PC-9 (cell line): ENCODE measurements at regions of chr12 and their contacts with region 1.

Region 1: DNA sequence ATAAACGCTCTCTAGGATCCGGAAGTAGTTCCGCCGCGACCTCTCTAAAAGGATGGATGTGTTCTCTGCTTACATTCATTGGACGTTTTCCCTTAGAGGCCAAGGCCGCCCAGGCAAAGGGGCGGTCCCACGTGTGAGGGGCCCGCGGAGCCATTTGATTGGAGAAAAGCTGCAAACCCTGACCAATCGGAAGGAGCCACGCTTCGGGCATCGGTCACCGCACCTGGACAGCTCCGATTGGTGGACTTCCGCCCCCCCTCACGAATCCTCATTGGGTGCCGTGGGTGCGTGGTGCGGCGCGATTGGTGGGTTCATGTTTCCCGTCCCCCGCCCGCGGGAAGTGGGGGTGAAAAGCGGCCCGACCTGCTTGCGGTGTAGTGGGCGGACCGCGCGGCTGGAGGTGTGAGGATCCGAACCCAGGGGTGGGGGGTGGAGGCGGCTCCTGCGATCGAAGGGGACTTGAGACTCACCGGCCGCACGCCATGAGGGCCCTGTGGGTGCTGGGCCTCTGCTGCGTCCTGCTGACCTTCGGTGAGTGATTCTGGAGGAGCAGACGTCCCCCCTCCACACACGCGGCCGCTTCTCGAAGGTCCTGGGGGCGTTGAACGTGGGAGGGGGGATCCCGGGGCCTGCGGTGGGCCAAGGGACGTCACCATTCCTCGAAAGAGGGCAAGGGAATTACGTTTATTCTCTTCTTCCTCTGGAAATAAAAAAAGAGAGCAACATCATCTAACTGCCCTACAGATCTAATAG is at the start of gene HSP90B1:
- DNase-seq: peak; percentile 99
- H3K4me3 ChIP-seq: peak within 1 kb of the TSS; percentile 98
- H3K27ac ChIP-seq: peak within 1 kb of the TSS; percentile 88
- H3K4me1 ChIP-seq: peaks cover 30% of the 10 kb centered on the region
- H3K27me3 ChIP-seq: no peaks in the 10 kb centered on the region
- CTCF ChIP-seq: no peak
- total RNA-seq, gene HSP90B1: 398 and 534 TPM in 2 replicates

Region 2: DNA sequence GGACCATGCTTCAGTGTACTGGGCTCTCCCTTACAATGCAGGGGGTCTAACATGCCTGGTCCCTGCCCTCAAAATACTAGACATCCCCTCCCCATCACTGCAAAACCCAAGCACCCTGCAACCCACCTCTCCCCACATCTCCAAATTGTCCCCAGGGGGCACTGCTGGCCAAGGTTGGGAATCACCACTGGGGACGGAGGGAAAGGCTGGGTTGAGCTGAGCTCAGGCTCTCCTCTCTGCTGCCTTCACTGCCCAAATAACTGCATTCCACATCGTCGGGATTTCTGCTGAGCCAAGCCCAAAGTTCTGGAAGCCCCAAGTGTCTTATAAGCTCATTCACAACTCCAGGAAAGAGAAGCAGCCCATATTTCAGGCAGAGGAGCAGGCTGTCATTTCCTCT is 158.7 kb before region 1 on chr12:
- CTCF ChIA-PET with region 1: no interaction called
- POLR2A ChIA-PET with region 1: interaction called, 3 read pairs
- intact Hi-C with region 1: loop called (anchors 5 kb)
- DNase-seq: peak in 1 of 2 experiments; percentile 49
- H3K4me3 ChIP-seq: no peak overlapping the region
- H3K27ac ChIP-seq: no peak overlapping the region
- H3K4me1 ChIP-seq: no peaks in the 10 kb centered on the region
- H3K27me3 ChIP-seq: no peaks in the 10 kb centered on the region
- CTCF ChIP-seq: peak; percentile 73

Region 3: DNA sequence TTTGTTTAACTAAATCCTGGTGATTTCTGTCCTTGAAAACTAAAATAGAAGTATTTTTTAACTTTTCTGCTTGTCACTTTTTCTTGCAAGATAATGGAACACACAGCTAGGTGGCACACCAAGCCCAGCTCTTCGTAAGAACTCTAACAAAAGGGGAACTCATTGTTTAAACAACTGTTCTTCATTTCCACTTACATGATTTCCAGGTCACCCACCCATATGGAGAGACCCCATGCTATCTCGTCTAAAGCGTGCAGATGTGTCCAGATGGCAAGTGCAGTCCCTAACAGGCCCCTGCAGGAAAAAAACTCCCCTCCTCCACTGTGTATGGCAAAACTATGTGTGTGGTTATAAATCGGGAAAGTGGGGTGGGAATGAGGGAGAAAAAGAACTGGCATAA is 45.9 kb before region 1 on chr12:
- CTCF ChIA-PET with region 1: no interaction called
- POLR2A ChIA-PET with region 1: interaction called, 8 read pairs
- intact Hi-C with region 1: loop called (anchors 5 kb)
- DNase-seq: no peak
- H3K4me3 ChIP-seq: no peak overlapping the region
- H3K27ac ChIP-seq: no peak overlapping the region
- H3K4me1 ChIP-seq: peaks cover 7% of the 10 kb centered on the region; the same call in 1 of the 2 replicates
- H3K27me3 ChIP-seq: no peaks in the 10 kb centered on the region
- CTCF ChIP-seq: peak; percentile 62

Region 4: DNA sequence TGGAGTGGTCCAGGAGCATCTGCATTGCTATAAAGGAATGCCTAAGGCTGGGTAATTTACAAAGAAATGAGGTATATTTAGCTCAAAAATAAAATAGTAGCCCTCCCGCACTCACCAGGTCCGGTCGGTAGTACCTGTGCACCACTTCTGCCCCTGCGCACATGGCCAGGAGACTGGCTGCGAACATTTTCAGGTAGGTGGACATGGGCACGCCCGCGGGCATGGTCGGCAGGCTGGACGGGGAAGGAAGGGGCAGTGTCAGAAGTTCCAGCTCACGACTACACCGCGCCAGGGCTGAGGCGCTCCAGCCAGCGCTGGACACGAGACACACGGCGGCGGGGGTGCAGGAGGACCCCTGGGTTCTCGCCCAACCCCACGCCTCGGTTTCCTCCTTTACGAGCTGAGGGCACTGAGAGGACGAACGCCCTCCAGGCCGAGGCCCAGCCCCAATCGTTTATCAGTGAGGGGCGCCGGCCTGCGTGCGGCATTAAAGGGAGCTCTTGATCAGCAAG is 26.4 kb after region 1 on chr12:
- CTCF ChIA-PET with region 1: no interaction called
- POLR2A ChIA-PET with region 1: no interaction called
- intact Hi-C with region 1: loop called (anchors 1 kb)
- DNase-seq: peak; percentile 34 to 41
- H3K4me3 ChIP-seq: peak overlapping the region; percentile 97
- H3K27ac ChIP-seq: peak overlapping the region; percentile 75
- H3K4me1 ChIP-seq: peaks cover 22% of the 10 kb centered on the region
- H3K27me3 ChIP-seq: no peaks in the 10 kb centered on the region
- CTCF ChIP-seq: no peak

Region 5: GRCh38 chr12:103965590-103966504 is 35.6 kb after region 1 on chr12 and contains the start of gene TDG:
- CTCF ChIA-PET with region 1: no interaction called
- POLR2A ChIA-PET with region 1: no interaction called
- intact Hi-C with region 1: loop called (anchors 1 kb)
- DNase-seq: peak; percentile 95
- H3K4me3 ChIP-seq: peak within 1 kb of the TSS; percentile 89
- H3K27ac ChIP-seq: peak within 1 kb of the TSS; percentile 80
- H3K4me1 ChIP-seq: peaks cover 40% of the 10 kb centered on the region
- H3K27me3 ChIP-seq: no peaks in the 10 kb centered on the region
- CTCF ChIP-seq: no peak; the same call in 1 of the 2 replicates
- total RNA-seq, gene TDG: 17.9 and 21.0 TPM in 2 replicates

Region 6: DNA sequence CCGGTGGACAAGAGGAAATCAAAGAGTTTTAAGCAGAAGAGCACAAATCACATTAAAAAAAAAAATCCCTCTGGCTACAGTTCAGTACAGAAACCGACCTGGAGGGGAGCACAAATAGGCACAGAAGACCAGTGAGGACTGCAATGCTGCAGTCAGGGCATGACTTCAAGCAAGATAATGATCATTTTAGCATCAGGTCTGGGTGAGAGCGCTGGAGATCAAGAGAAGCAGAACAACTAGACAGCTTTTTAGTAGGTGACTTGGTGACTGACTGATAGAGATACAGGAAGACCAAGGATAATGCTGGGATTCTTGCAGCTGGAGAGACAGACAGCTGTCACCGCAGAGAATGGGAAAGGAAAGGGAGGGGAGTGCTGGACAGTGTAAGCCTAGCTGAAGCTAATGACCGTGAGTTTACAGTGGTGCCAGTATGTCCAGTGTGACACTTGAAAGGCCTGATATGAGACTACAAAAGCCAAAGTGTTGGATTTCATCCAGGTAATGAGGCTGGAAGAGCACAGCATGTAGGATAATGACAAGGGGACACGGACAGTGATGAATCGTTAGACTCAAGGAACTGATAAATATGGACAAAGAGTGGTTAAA is 202.2 kb after region 1 on chr12:
- CTCF ChIA-PET with region 1: no interaction called
- POLR2A ChIA-PET with region 1: no interaction called
- intact Hi-C with region 1: no loop called
- DNase-seq: no peak
- H3K4me3 ChIP-seq: no peak overlapping the region
- H3K27ac ChIP-seq: no peak overlapping the region
- H3K4me1 ChIP-seq: peaks cover 19% of the 10 kb centered on the region
- H3K27me3 ChIP-seq: no peaks in the 10 kb centered on the region
- CTCF ChIP-seq: no peak

Region 7: DNA sequence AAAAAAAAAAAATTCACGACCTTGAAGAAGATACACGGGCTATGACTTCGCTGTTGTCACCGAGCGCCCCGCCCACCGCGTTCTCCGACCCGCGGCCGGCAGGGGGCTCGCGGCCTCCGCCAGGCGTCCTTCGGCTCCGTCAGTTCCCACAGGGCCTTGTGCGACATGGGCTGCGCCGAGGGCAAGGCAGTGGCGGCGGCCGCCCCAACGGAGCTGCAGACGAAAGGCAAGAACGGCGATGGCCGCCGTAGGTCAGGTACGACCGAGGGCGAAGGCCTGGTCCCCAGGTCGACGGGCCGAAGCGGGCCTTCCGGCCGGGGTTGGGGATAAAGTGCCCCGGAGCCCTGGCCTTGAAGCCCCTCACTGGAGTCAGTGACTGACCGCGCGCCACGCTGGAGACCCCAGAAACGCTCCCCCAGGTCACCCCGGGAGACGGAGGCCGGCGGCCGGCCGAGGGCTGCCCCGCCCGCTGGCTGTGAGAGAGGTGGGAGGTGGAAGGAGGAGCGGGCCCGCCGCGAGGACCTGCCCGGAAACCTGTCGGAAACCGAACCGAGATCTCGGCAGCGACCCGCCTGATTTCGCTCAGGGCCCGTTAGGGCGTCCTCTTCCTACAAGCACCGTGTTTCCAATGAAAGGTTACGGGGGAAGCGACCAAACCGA is 285.6 kb after region 1 on chr12 and contains the start of gene TXNRD1:
- CTCF ChIA-PET with region 1: no interaction called
- POLR2A ChIA-PET with region 1: no interaction called
- intact Hi-C with region 1: no loop called
- DNase-seq: peak; percentile 79 to 90
- H3K4me3 ChIP-seq: peak within 1 kb of the TSS; percentile 67
- H3K27ac ChIP-seq: peak within 1 kb of the TSS; percentile 99
- H3K4me1 ChIP-seq: peaks cover 56% of the 10 kb centered on the region
- H3K27me3 ChIP-seq: no peaks in the 10 kb centered on the region
- CTCF ChIP-seq: peak; percentile 88
- total RNA-seq, gene TXNRD1: 1,205 and 1,250 TPM in 2 replicates